Activated CD8-positive, alpha-beta memory T cell treated with anti-CD3 and anti-CD28 coated beads, Interleukin-2, amount 10 ng/mL, durations not matched to agents 7 days and 5 days (primary cell): ENCODE measurements at regions of chr6 and their contacts with region 1.

Region 1: DNA sequence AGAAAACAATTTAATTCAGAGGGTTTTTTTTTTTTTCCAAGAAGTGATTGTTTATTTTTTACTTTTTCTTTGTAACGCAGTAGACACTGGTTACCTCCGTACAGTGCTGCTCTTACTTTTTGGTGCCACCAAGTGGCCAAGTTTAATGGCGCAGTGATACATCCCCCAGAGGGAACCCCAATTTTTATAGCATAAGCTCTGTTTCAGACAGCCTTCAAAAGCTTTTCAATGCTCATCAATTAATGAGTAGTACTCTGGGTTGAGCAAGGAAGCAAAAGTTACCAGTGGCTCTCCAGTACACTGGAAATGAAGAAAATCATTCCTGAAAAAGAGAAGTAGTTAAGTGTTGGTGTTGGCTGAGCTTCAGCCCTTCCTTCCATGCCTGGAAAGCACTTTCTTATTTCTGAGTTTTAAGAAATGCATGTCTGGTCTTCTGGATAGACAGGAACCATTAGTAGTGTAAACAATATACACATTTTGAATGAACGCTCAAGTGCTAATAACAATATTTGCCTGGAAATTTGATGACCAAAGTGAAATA is 129.1 kb upstream of the SMLR1 start:
- DNase-seq: peak; percentile 83
- ATAC-seq: peak; percentile 99
- H3K4me3 Mint-ChIP-seq: no peak overlapping the region
- H3K27ac Mint-ChIP-seq: peak overlapping the region; percentile 69
- H3K4me1 Mint-ChIP-seq: peaks cover 43% of the 10 kb centered on the region
- H3K27me3 Mint-ChIP-seq: no peaks in the 10 kb centered on the region

Region 2: DNA sequence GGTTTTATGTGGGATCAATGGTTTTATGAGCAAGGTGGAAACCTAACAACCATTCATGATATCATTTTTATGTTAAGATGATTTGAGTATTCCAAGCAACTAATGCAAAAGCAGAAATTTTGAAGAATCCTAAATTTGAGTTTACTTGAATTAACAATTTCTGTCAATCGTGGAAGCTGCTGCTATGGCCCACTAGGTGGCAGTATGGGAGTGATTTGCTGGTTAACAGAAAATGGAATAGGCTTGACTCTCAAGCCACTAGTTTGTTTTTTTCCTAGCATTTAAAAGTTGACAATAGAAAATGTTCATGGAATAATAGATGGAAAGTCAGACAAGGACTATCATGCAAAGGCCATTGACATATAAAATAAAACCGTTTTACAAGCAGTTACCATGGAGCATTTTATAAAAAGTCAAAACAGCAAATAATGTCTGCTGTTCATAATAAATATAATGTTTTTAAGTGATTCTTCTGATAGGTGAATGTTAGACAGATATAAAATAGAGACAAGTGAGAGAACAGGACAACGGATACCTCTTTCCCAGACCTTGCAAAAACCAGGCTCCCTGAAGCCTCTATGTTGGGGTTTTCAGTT is 375.3 kb before region 1 on chr6:
- CTCF ChIA-PET with region 1: interaction called, 37 read pairs
- DNase-seq: peak; percentile 69
- ATAC-seq: peak; percentile 55
- H3K4me3 Mint-ChIP-seq: no peak overlapping the region
- H3K27ac Mint-ChIP-seq: peak overlapping the region; percentile 61
- H3K4me1 Mint-ChIP-seq: peaks cover 10% of the 10 kb centered on the region
- H3K27me3 Mint-ChIP-seq: no peaks in the 10 kb centered on the region

Region 3: GRCh38 chr6:130365166-130366106 is 332.6 kb before region 1 on chr6 and contains the start of gene TMEM200A:
- CTCF ChIA-PET with region 1: interaction called, 13 read pairs
- DNase-seq: peak; percentile 55
- ATAC-seq: peak; percentile 75
- H3K4me3 Mint-ChIP-seq: peak within 1 kb of the TSS; percentile 65
- H3K27ac Mint-ChIP-seq: peak within 1 kb of the TSS; percentile 19
- H3K4me1 Mint-ChIP-seq: peaks cover 23% of the 10 kb centered on the region
- H3K27me3 Mint-ChIP-seq: peaks cover 34% of the 10 kb centered on the region
- total RNA-seq, gene TMEM200A: 3.0 to 5.0 TPM